ENCODE measurements at regions of chr1 and their contacts with region 1.

Region 1: DNA sequence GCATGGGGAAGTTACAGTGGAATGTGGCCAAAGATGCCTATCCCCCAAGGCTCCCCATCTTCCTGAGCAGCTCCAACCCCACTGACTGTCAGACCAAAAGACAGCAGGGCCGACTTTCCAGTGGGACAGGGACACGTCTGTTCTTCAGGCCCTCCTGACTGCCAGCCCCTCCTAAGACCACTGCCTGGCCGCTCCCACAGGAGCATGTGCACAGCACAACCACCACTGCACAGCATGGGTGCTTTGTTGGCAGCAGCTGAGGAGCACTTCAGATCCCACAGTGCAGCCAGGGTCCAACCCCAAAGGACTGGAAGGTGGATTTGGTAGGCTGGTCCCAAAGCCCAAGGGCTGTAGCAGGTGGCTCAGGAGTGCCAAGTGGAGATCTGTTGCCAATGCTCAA is 648.3 kb upstream of the BRINP3 start:
- DNase-seq: no peak
- H3K4me3 ChIP-seq: no peak overlapping the region
- H3K27ac ChIP-seq: no peak overlapping the region
- H3K4me1 ChIP-seq: no peaks in the 10 kb centered on the region
- H3K27me3 ChIP-seq: no peaks in the 10 kb centered on the region
- CTCF ChIP-seq: no peak

Region 2: GRCh38 chr1:190863674-190864641 is 262.0 kb before region 1 on chr1:
- CTCF ChIA-PET with region 1: no interaction called
- dilution Hi-C with region 1: no loop called
- in situ Hi-C with region 1: no loop called
- intact Hi-C with region 1: loop called (anchors 2 kb)
- DNase-seq: peak; percentile 74
- H3K4me3 ChIP-seq: no peak overlapping the region
- H3K27ac ChIP-seq: no peak overlapping the region
- H3K4me1 ChIP-seq: peaks cover 14% of the 10 kb centered on the region
- H3K27me3 ChIP-seq: no peaks in the 10 kb centered on the region
- CTCF ChIP-seq: peak in 1 of 2 donors; percentile 37

Region 3: DNA sequence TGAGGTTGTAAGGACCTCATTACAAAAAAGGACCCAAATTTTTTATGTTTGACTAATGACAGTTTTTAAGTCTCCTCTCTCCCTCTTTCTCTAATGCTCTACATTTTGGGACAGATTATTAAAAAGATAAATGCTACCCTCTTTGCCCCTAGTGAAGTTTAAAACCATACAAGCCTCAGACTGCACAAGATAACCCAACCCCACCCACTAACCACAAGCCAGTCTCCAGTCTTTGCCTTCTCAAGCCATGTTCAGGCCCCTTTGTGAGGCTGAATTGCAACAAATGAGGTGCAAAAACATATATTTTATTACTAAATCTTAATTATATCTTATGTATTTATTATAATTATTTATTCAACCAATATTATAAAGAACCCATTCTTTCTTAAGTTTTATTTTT is 51.1 kb before region 1 on chr1:
- CTCF ChIA-PET with region 1: no interaction called
- dilution Hi-C with region 1: no loop called
- in situ Hi-C with region 1: no loop called
- intact Hi-C with region 1: no loop called
- DNase-seq: no peak
- H3K4me3 ChIP-seq: no peak overlapping the region
- H3K27ac ChIP-seq: no peak overlapping the region
- H3K4me1 ChIP-seq: no peaks in the 10 kb centered on the region
- H3K27me3 ChIP-seq: no peaks in the 10 kb centered on the region
- CTCF ChIP-seq: no peak

Region 4: GRCh38 chr1:191595170-191595569 is 469.2 kb after region 1 on chr1:
- CTCF ChIA-PET with region 1: no interaction called
- dilution Hi-C with region 1: no loop called
- in situ Hi-C with region 1: no loop called
- intact Hi-C with region 1: no loop called
- DNase-seq: no peak
- H3K4me3 ChIP-seq: no peak overlapping the region
- H3K27ac ChIP-seq: no peak overlapping the region
- H3K4me1 ChIP-seq: no peaks in the 10 kb centered on the region
- H3K27me3 ChIP-seq: no peaks in the 10 kb centered on the region
- CTCF ChIP-seq: no peak